IMR-90 (cell line): ENCODE measurements at regions of chr4 and their contacts with region 1.

Region 1: DNA sequence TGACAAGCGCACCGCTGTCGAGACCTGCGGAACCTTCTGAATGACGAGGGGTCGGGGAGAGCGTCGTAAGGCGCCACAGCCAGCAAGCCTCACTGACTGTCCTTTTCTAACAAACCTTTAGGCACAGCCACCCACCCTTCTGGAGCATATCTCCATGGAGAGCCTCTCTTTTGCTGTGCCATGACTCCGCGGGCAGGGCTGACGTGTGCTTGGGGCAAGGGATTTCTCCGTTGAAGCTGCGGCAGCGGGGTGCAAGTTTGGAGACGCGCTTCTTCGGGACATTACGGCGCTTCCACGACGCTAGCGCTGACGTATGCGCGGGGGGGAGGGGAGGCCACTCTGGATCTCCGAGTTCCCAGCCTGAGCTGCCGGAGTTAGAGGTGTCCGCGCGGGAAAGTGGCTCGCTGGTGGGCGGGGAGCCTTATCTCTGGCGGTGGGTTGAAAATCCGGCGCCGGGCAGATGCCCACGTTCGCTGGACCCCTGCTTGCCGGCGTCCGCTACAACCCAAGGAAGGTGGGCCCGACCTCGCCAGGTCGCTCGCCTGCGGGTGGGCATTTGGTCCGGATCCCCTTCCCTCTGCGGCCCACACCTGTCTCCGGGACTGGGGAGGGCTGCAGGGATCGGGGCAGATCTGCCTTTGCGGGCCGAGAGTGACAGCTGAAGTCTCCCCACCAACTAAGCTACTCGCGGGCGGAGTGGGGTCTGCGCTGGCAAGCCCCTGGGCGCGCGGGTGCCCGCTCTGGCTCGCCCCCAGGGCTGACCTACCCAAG is 543 bp upstream of the SLC10A7 start:
- DNase-seq: peak; percentile 80
- ATAC-seq: peak; percentile 93
- H3K4me3 ChIP-seq: peak overlapping the region; percentile 94
- H3K27ac ChIP-seq: peak overlapping the region; percentile 68
- H3K4me1 ChIP-seq: no peaks in the 10 kb centered on the region
- H3K27me3 ChIP-seq: no peaks in the 10 kb centered on the region
- CTCF ChIP-seq: no peak
- POLR2A ChIP-seq: peak; percentile 19; the same call in 1 of the 2 replicates
- RAD21 ChIP-seq: no peak

Region 2: GRCh38 chr4:146243141-146243882 is 279.0 kb before region 1 on chr4:
- CTCF ChIA-PET with region 1: no interaction called
- POLR2A ChIA-PET with region 1: no interaction called
- dilution Hi-C with region 1: no loop called
- in situ Hi-C with region 1: no loop called
- intact Hi-C with region 1: loop called (anchors 1 kb)
- DNase-seq: peak; percentile 37
- ATAC-seq: no peak
- H3K4me3 ChIP-seq: no peak overlapping the region
- H3K27ac ChIP-seq: no peak overlapping the region
- H3K4me1 ChIP-seq: peaks cover 11% of the 10 kb centered on the region
- H3K27me3 ChIP-seq: no peaks in the 10 kb centered on the region
- CTCF ChIP-seq: 0 out of 2 replicates have a peak, but pooled peaks have one; percentile 4
- POLR2A ChIP-seq: no peak
- RAD21 ChIP-seq: no peak

Region 3: DNA sequence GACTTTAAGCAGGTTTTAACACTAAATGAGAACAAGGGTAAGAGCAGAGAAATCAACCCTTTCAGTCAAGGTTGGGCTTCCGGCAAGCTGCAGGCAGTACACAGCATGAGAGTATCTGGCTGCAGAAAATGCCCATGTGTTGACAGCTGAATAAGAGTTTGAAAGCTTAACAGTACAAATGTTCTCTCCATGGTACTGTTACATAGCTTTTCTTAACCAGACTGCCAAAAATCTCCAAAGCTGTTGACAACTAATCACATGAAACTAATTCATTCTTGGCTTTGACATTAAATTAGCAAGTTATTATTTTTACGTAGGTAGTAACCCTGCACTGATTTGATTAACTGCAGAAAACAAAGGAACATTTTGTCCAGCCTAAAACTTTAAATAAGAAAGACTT is 154.1 kb before region 1 on chr4:
- CTCF ChIA-PET with region 1: no interaction called
- POLR2A ChIA-PET with region 1: no interaction called
- dilution Hi-C with region 1: no loop called
- in situ Hi-C with region 1: no loop called
- intact Hi-C with region 1: no loop called
- DNase-seq: no peak
- ATAC-seq: no peak
- H3K4me3 ChIP-seq: no peak overlapping the region
- H3K27ac ChIP-seq: no peak overlapping the region
- H3K4me1 ChIP-seq: no peaks in the 10 kb centered on the region
- H3K27me3 ChIP-seq: no peaks in the 10 kb centered on the region
- CTCF ChIP-seq: no peak
- POLR2A ChIP-seq: no peak
- RAD21 ChIP-seq: no peak

Region 4: GRCh38 chr4:146472404-146472803 is 49.9 kb before region 1 on chr4:
- CTCF ChIA-PET with region 1: no interaction called
- POLR2A ChIA-PET with region 1: no interaction called
- dilution Hi-C with region 1: no loop called
- in situ Hi-C with region 1: no loop called
- intact Hi-C with region 1: no loop called
- DNase-seq: no peak
- ATAC-seq: no peak
- H3K4me3 ChIP-seq: no peak overlapping the region
- H3K27ac ChIP-seq: no peak overlapping the region
- H3K4me1 ChIP-seq: no peaks in the 10 kb centered on the region
- H3K27me3 ChIP-seq: no peaks in the 10 kb centered on the region
- CTCF ChIP-seq: no peak
- POLR2A ChIP-seq: no peak
- RAD21 ChIP-seq: no peak

Region 5: GRCh38 chr4:146486565-146486964 is 35.7 kb before region 1 on chr4:
- CTCF ChIA-PET with region 1: no interaction called
- POLR2A ChIA-PET with region 1: no interaction called
- dilution Hi-C with region 1: no loop called
- in situ Hi-C with region 1: no loop called
- intact Hi-C with region 1: no loop called
- DNase-seq: no peak
- ATAC-seq: no peak
- H3K4me3 ChIP-seq: no peak overlapping the region
- H3K27ac ChIP-seq: no peak overlapping the region
- H3K4me1 ChIP-seq: no peaks in the 10 kb centered on the region
- H3K27me3 ChIP-seq: no peaks in the 10 kb centered on the region
- CTCF ChIP-seq: no peak
- POLR2A ChIP-seq: no peak
- RAD21 ChIP-seq: no peak

Region 6: DNA sequence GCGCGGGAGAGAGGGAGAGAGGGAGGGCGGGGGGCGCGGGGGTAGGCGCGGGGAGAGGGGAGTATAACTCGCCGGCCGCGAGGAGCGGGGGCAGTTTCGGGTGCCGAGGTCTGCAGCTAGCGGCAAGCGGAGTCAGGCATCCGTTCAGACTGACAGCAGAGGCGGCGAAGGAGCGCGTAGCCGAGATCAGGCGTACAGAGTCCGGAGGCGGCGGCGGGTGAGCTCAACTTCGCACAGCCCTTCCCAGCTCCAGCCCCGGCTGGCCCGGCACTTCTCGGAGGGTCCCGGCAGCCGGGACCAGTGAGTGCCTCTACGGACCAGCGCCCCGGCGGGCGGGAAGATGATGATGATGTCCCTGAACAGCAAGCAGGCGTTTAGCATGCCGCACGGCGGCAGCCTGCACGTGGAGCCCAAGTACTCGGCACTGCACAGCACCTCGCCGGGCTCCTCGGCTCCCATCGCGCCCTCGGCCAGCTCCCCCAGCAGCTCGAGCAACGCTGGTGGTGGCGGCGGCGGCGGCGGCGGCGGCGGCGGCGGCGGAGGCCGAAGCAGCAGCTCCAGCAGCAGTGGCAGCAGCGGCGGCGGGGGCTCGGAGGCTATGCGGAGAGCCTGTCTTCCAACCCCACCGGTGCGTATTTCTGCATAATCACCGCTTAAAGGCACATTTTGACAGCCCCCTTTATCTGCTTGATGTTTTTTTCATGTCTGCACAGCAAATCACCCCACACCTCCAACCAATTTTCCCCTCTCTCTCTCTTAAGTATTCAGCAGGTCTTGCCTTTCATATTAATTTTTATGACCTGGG is 116.7 kb after region 1 on chr4 and contains the start of gene POU4F2:
- CTCF ChIA-PET with region 1: no interaction called
- POLR2A ChIA-PET with region 1: no interaction called
- dilution Hi-C with region 1: no loop called
- in situ Hi-C with region 1: no loop called
- intact Hi-C with region 1: loop called (anchors 5 kb)
- DNase-seq: no peak
- ATAC-seq: peak; percentile 62
- H3K4me3 ChIP-seq: no peak within 1 kb of the TSS; the same call in 1 of the 2 replicates
- H3K27ac ChIP-seq: no peak within 1 kb of the TSS
- H3K4me1 ChIP-seq: no peaks in the 10 kb centered on the region
- H3K27me3 ChIP-seq: peaks cover 45% of the 10 kb centered on the region
- CTCF ChIP-seq: no peak
- POLR2A ChIP-seq: no peak
- RAD21 ChIP-seq: no peak
- total RNA-seq, gene POU4F2: not detected in 2 replicates

Region 7: DNA sequence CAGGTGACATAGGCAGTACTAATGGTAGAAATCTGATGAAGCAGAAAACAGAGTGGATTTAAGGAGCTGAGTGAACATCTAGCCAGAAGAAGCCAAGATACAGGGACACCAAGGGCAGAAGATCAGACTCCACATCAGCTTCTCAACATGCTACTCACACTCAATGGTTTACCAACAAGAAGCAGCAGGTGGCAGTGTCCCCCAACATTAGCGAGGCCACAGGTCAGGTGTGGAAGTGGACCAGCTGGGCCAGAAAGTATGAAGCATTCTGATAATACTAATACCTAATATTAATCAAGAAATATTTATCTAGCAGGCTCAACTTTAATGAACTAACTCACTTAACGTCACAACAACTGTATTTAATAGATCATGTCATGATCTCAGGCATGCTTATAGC is 496.8 kb after region 1 on chr4:
- CTCF ChIA-PET with region 1: no interaction called
- POLR2A ChIA-PET with region 1: no interaction called
- dilution Hi-C with region 1: no loop called
- in situ Hi-C with region 1: no loop called
- intact Hi-C with region 1: no loop called
- DNase-seq: peak; percentile 56
- ATAC-seq: peak; percentile 89
- H3K4me3 ChIP-seq: no peak overlapping the region
- H3K27ac ChIP-seq: no peak overlapping the region
- H3K4me1 ChIP-seq: no peaks in the 10 kb centered on the region
- H3K27me3 ChIP-seq: peaks cover 8% of the 10 kb centered on the region
- CTCF ChIP-seq: peak; percentile 72
- POLR2A ChIP-seq: no peak
- RAD21 ChIP-seq: peak; percentile 88